Lower lobe of right lung (tissue), 2 donors: ENCODE measurements at regions of chr7 and their contacts with region 1.

Region 1: DNA sequence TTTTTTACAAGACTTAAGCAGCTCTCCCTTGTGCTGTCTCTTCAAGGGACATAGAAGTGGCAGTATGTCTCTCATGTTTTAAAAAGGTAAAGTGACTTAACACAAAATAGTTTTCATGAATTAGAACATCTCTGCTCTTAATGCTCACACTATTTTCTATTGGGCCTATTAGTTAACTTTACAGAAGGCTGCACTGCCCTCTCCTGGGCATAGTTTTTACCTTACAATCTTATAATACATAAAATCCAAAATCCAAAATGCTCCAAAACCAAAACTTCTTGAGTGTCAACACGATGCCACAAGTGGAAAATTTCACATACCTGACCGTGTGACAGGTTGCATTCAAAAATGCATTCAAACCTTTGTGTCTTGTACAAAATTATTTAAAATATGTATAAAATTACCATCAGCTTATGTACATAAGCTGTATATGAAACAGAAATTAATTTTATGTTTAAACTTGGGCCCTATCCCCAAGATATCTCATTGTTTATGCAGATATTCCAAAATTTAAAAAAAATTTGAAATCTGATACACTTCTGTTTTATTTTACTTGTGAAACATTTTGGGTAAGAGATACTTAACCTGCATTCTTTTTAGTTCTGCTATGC is 25.8 kb downstream of the TES start:
- DNase-seq: no peak
- ATAC-seq: peak; percentile 56 to 68
- H3K4me3 ChIP-seq: no peak overlapping the region
- H3K27ac ChIP-seq: no peak overlapping the region
- H3K4me1 ChIP-seq: peaks cover 22% of the 10 kb centered on the region
- H3K27me3 ChIP-seq: no peaks in the 10 kb centered on the region
- CTCF ChIP-seq: peak; percentile 59

Region 2: DNA sequence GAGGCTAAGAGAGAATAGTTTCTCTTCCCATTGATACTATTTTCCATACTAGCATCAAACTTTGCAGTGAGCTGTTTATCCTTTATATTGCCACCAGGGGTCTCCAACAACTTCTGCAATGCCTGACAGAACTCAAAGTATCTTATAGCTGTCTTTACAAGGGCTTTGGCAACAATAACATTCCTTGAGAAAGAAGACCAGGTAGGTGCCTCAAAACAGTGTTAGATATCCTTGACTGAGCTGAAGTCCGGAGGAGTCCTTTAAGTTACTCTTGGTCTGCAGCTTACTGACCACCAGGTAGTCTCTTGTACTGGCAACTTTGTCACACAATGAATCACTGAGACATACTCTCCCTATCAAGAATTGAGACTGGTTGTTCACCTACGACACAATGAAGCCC is 55.8 kb before region 1 on chr7:
- intact Hi-C with region 1: loop called (anchors 5 kb)
- DNase-seq: no peak
- ATAC-seq: peak; percentile 65 to 83
- H3K4me3 ChIP-seq: no peak overlapping the region
- H3K27ac ChIP-seq: no peak overlapping the region
- H3K4me1 ChIP-seq: no peaks in the 10 kb centered on the region
- H3K27me3 ChIP-seq: no peaks in the 10 kb centered on the region
- CTCF ChIP-seq: peak; percentile 71